H1 (cell line): ENCODE measurements at regions of chr4 and their contacts with region 1.

Region 1: DNA sequence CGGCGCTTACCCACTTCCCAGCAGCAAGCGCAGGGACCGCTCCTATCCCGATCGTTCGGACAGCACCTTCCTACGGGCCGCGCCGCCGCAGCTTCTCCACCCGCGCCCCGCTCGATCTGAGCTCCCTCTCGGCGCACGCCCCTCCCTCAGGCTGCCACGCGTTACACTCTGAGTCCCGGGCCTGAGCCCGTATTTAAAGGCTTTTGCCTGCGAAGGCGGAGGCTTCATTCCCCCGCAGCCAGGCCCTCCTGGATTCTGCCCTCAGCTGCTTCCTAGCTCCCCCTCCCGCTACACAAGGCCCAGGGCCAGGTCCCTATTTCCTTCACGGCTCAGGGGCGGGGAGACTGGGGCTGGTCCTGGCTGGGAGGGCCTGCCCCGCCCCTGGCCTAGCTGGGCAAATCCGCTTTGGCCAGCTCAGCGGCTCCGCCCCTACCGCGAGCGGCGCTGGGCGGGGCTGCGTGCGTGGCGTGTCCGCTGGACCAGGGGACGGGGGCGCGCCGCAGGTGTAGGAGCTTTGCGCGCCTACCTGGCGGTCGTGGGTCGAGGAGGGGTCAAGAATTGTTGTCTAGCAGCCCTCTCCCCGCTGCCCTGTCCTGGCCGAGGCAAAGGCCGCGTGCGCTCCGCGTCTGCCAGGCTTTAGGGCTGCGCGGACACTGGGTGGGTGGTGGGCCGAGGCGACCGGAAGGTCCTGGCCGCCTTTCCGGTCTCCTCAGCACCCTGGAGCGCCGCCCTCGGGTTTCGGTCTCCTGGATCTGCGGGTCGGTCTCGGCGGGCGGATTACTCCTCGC is at the start of gene UGDH:
- DNase-seq: peak; percentile 87 to 95
- H3K4me3 ChIP-seq: peak within 1 kb of the TSS; percentile 90 to 98 (median 95)
- H3K27ac ChIP-seq: peak within 1 kb of the TSS; percentile 93
- H3K4me1 ChIP-seq: peaks cover 0 to 4% (median 1%) of the 10 kb centered on the region in 4 experiments; a peak in 3 of 7 replicates
- H3K27me3 ChIP-seq: no peaks in the 10 kb centered on the region
- CTCF ChIP-seq: no peak
- EP300 ChIP-seq: no peak; a peak in 1 of 3 replicates
- POLR2A ChIP-seq: peak; percentile 63 to 89
- RAD21 ChIP-seq: no peak
- total RNA-seq, gene UGDH: 126 and 128 TPM in 2 replicates

Region 2: DNA sequence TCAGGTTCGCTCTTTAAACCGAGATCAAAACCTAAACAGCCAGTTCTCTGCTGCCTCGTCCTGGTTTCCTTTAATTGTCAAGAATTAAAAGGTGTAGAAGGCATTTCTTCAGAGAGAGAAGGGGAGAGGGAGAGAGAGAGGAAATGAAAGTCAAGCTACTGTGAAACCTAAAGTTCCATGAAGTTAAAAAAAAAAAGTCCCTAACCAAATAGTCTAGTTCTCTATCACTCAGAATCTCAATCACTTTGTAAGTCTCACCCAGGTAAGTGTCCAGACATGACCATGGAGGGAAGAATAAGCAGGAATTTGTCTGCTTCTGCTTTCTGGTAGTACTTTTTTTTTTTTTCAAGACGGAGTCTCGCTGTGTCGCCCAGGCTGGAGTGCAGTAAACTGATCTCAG is 130.0 kb after region 1 on chr4:
- CTCF ChIA-PET with region 1: no interaction called
- POLR2A ChIA-PET with region 1: no interaction called
- DNase-seq: no peak
- H3K4me3 ChIP-seq: no peak overlapping the region
- H3K27ac ChIP-seq: no peak overlapping the region
- H3K4me1 ChIP-seq: no peaks in the 10 kb centered on the region
- H3K27me3 ChIP-seq: no peaks in the 10 kb centered on the region
- CTCF ChIP-seq: no peak
- EP300 ChIP-seq: no peak
- POLR2A ChIP-seq: no peak
- RAD21 ChIP-seq: no peak

Region 3: GRCh38 chr4:39697740-39698423 is 170.4 kb after region 1 on chr4 and contains the start of gene UBE2K:
- CTCF ChIA-PET with region 1: no interaction called
- POLR2A ChIA-PET with region 1: interaction called, 12 read pairs
- DNase-seq: peak; percentile 63 to 92
- H3K4me3 ChIP-seq: peak within 1 kb of the TSS; percentile 82 to 95 (median 94)
- H3K27ac ChIP-seq: peak within 1 kb of the TSS; percentile 96
- H3K4me1 ChIP-seq: peaks cover 0 to 9% (median 4%) of the 10 kb centered on the region in 4 experiments; a peak in 3 of 7 replicates
- H3K27me3 ChIP-seq: no peaks in the 10 kb centered on the region
- CTCF ChIP-seq: peak in 1 of 3 experiments; percentile 12; a peak in 1 of 4 replicates
- EP300 ChIP-seq: no peak
- POLR2A ChIP-seq: peak; percentile 69 to 95
- RAD21 ChIP-seq: peak in 1 of 2 experiments; percentile 8; a peak in 1 of 4 replicates
- total RNA-seq, gene UBE2K: 169 and 174 TPM in 2 replicates